ENCODE measurements at regions of chr2 and their contacts with region 1.

Region 1: GRCh38 chr2:68709421-68709911 is 25.1 kb upstream of the ARHGAP25 start:
- DNase-seq: no peak
- ATAC-seq: peak; percentile 71
- H3K4me3 Mint-ChIP-seq: no peak overlapping the region
- H3K27ac Mint-ChIP-seq: peak overlapping the region; percentile 6
- H3K4me1 Mint-ChIP-seq: peaks cover 39% of the 10 kb centered on the region
- H3K27me3 Mint-ChIP-seq: no peaks in the 10 kb centered on the region
- CTCF ChIP-seq: peak; percentile 51

Region 2: GRCh38 chr2:67423489-67423888 is 1286.0 kb before region 1 on chr2:
- CTCF ChIA-PET with region 1: no interaction called
- POLR2A ChIA-PET with region 1: no interaction called
- intact Hi-C with region 1: no loop called
- DNase-seq: no peak
- ATAC-seq: no peak
- H3K4me3 Mint-ChIP-seq: no peak overlapping the region
- H3K27ac Mint-ChIP-seq: no peak overlapping the region
- H3K4me1 Mint-ChIP-seq: no peaks in the 10 kb centered on the region
- H3K27me3 Mint-ChIP-seq: no peaks in the 10 kb centered on the region
- CTCF ChIP-seq: no peak

Region 3: DNA sequence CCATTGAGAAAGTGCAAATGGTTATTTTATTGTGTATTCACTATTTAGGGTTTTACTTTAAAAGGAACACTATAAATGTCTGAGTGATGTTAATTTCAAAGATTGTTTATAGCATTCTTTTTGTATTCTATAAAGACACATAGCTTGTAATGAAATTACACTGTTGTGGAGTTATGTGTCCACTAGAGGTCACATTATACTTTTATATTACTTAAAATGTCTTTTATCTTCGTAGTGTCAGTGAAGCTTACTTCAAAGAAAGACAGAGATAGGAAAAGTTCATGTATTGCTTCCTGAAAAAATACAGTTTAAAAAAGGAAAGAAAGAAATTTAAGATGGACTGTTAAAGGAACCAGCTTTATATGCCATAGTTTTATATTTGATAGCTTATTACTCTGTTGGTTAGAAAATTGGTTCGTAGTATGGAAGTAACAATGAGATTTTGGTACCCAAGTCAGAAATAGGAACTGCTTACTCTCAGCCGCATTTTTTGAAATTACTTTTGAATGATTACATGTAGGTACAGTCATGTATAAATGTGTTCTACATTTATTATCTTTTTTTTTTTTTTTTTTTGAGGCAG is 221.6 kb before region 1 on chr2:
- CTCF ChIA-PET with region 1: interaction called, 20 read pairs
- POLR2A ChIA-PET with region 1: no interaction called
- intact Hi-C with region 1: loop called (anchors 2 kb)
- DNase-seq: no peak
- ATAC-seq: peak; percentile 54
- H3K4me3 Mint-ChIP-seq: no peak overlapping the region
- H3K27ac Mint-ChIP-seq: no peak overlapping the region
- H3K4me1 Mint-ChIP-seq: peaks cover 5% of the 10 kb centered on the region
- H3K27me3 Mint-ChIP-seq: no peaks in the 10 kb centered on the region
- CTCF ChIP-seq: peak; percentile 39

Region 4: GRCh38 chr2:68721482-68722101 is 12.1 kb after region 1 on chr2:
- CTCF ChIA-PET with region 1: interaction called, 15 read pairs
- POLR2A ChIA-PET with region 1: interaction called, 5 read pairs
- intact Hi-C with region 1: loop called (anchors 2 kb)
- DNase-seq: no peak
- ATAC-seq: peak; percentile 82
- H3K4me3 Mint-ChIP-seq: peak overlapping the region; percentile 38
- H3K27ac Mint-ChIP-seq: peak overlapping the region; percentile 76
- H3K4me1 Mint-ChIP-seq: peaks cover 77% of the 10 kb centered on the region
- H3K27me3 Mint-ChIP-seq: no peaks in the 10 kb centered on the region
- CTCF ChIP-seq: no peak

Region 5: DNA sequence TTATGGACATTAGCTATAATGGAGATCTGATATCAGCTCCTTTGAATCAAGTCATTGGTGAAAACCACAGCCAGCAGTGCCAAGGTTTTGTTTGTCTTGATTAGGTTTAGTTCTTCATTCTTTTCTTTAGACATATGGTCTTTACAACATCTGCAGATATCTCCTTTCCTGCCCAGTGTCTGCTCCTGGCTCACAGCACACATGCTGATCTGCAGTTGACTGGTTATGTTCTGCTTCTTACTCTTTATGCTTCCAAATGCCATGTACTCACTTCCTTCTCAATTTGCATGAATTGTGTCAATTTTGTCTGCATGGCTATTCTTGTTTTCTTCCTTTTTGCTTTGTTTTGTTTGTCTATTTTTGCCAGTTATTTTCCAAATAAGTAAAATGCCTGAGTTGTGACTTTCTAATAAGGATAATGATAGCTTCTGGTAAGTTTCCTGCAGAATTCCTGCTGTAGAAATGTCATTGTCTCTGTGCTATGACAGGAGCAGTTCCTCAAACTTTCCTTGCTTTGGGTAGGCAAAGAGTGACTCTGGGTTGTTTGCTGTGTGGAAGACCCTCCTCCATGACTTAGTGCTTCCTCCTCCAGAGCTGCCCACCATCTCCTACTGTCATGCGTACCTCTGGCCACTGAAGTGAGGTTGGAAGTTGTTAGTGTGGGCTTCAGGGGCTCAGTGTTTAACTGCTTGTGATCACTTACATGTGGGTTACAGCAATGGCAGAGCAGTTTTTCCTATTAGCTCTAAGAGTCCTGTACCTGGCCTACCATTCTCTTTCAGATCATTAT is 33.4 kb after region 1 on chr2:
- CTCF ChIA-PET with region 1: interaction called, 57 read pairs
- POLR2A ChIA-PET with region 1: interaction called, 14 read pairs
- intact Hi-C with region 1: no loop called
- DNase-seq: no peak
- ATAC-seq: peak; percentile 49
- H3K4me3 Mint-ChIP-seq: peak overlapping the region; percentile 55
- H3K27ac Mint-ChIP-seq: peak overlapping the region; percentile 87
- H3K4me1 Mint-ChIP-seq: peaks cover 91% of the 10 kb centered on the region
- H3K27me3 Mint-ChIP-seq: no peaks in the 10 kb centered on the region
- CTCF ChIP-seq: no peak

Region 6: GRCh38 chr2:68789603-68790002 is 80.1 kb after region 1 on chr2:
- CTCF ChIA-PET with region 1: interaction called, 16 read pairs
- POLR2A ChIA-PET with region 1: interaction called, 9 read pairs
- intact Hi-C with region 1: loop called (anchors 1 kb)
- DNase-seq: peak; percentile 75
- ATAC-seq: peak; percentile 87
- H3K4me3 Mint-ChIP-seq: peak overlapping the region; percentile 61
- H3K27ac Mint-ChIP-seq: no peak overlapping the region
- H3K4me1 Mint-ChIP-seq: peaks cover 47% of the 10 kb centered on the region
- H3K27me3 Mint-ChIP-seq: no peaks in the 10 kb centered on the region
- CTCF ChIP-seq: no peak

Region 7: GRCh38 chr2:68915393-68915792 is 205.9 kb after region 1 on chr2:
- CTCF ChIA-PET with region 1: interaction called, 72 read pairs
- POLR2A ChIA-PET with region 1: no interaction called
- intact Hi-C with region 1: no loop called
- DNase-seq: no peak
- ATAC-seq: no peak
- H3K4me3 Mint-ChIP-seq: no peak overlapping the region
- H3K27ac Mint-ChIP-seq: no peak overlapping the region
- H3K4me1 Mint-ChIP-seq: no peaks in the 10 kb centered on the region
- H3K27me3 Mint-ChIP-seq: no peaks in the 10 kb centered on the region
- CTCF ChIP-seq: no peak

Region 8: DNA sequence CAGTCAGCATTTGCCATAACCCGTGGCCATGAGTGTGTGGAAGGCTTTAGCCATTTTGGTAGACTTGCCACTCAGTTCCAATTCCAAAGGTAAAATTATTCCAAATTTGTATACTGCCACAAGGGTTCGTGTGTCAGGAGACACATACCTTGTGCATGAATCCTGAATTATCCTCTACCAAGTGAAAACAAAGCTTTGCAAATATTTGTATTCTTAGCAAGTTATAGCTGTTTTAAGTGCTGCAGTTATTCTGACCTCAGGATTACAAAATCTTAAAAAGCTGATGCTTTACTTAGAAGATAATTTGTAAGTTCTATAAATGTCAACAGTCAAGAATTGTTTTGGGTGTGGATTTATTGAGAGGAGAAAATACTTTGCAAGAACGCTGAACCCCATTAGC is 404.2 kb after region 1 on chr2:
- CTCF ChIA-PET with region 1: no interaction called
- POLR2A ChIA-PET with region 1: no interaction called
- intact Hi-C with region 1: no loop called
- DNase-seq: no peak
- ATAC-seq: no peak
- H3K4me3 Mint-ChIP-seq: no peak overlapping the region
- H3K27ac Mint-ChIP-seq: no peak overlapping the region
- H3K4me1 Mint-ChIP-seq: no peaks in the 10 kb centered on the region
- H3K27me3 Mint-ChIP-seq: peaks cover 5% of the 10 kb centered on the region
- CTCF ChIP-seq: no peak